ENCODE measurements at regions of chr9 and their contacts with region 1.

Region 1: GRCh38 chr9:133563001-133563796 is 28.7 kb downstream of the ADAMTSL2 start:
- DNase-seq: no peak
- ATAC-seq: no peak

Region 2: DNA sequence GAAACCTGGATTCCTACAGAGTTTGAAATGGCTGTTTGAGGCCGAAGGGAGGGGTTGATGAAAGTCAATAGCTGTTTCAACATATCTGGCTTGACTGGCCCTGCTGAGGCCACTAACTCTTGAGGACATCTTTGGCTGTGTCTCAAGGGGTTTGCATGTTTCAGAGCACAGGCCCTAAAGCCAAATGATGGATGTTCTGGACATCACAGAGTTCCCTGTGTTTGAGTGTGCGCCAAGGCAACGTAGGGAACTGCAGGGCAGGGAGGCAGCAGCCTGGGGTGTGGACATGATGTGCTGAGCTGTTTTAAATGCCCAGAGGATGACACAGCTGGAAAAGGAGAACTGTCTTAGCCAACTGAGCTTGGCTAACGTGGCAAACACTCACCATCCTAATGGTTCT is 1912.9 kb before region 1 on chr9:
- intact Hi-C with region 1: loop called (anchors 5 kb)
- DNase-seq: no peak
- ATAC-seq: peak; percentile 70